SK-N-SH (cell line): ENCODE measurements at regions of chr1 and their contacts with region 1.

Region 1: GRCh38 chr1:204565617-204566582 is 49.7 kb downstream of the MDM4 start:
- DNase-seq: peak; percentile 89
- H3K4me3 ChIP-seq: no peak overlapping the region; a peak in 1 of 4 replicates
- H3K27ac ChIP-seq: no peak overlapping the region
- H3K4me1 ChIP-seq: no peaks in the 10 kb centered on the region; a peak in 1 of 4 replicates
- H3K27me3 ChIP-seq: no peaks in the 10 kb centered on the region
- CTCF ChIP-seq: peak; percentile 82
- EP300 ChIP-seq: no peak
- RAD21 ChIP-seq: peak; percentile 94

Region 2: DNA sequence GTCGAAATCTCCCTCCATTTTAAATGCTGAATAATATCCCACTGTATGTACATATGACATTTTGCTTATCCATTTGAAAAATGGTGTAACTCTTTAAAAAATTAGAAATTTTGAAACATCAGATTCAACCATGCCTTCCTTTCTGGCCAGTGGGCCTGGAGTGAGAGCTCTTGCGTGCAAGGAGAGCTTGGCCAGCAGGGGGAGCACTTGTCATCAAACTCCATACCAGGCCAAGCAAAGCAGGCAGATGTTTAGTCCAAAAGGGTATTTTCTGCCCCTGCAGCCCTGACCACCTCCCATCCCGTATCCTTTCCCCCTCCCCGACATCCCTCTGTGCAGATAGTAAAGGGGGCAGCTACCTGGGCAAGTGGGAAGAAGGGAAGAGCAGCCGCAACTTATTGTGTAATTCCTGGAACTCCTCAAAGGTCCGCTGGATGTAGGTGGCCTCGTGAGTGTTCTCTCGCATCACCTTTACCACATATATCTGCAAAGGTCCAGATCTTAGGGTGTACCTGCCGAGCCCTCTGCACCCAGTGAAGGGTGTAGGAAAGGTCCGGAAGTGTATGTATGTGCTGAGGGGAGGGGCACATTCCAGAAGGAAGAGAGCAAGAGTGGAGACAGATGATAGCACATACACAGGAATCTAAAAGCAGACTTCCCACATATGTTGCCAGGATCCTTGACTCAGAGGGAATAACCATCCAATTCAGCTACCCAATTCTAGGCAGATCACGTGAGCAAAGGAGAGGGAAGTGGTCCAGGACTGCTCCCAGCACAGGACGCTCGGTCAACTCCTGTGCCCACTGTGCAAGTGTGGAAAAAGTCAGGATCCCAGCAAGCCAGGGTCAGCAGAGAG is 134.4 kb before region 1 on chr1:
- CTCF ChIA-PET with region 1: no interaction called
- POLR2A ChIA-PET with region 1: no interaction called
- DNase-seq: peak; percentile 83
- H3K4me3 ChIP-seq: peak overlapping the region in 1 of 2 experiments; percentile 39; a peak in 1 of 4 replicates
- H3K27ac ChIP-seq: peak overlapping the region in 1 of 2 experiments; percentile 26; a peak in 1 of 4 replicates
- H3K4me1 ChIP-seq: peaks cover 0 to 7% of the 10 kb centered on the region in 2 experiments; a peak in 2 of 4 replicates
- H3K27me3 ChIP-seq: no peaks in the 10 kb centered on the region
- CTCF ChIP-seq: peak; percentile 96
- EP300 ChIP-seq: no peak
- RAD21 ChIP-seq: peak; percentile 77

Region 3: DNA sequence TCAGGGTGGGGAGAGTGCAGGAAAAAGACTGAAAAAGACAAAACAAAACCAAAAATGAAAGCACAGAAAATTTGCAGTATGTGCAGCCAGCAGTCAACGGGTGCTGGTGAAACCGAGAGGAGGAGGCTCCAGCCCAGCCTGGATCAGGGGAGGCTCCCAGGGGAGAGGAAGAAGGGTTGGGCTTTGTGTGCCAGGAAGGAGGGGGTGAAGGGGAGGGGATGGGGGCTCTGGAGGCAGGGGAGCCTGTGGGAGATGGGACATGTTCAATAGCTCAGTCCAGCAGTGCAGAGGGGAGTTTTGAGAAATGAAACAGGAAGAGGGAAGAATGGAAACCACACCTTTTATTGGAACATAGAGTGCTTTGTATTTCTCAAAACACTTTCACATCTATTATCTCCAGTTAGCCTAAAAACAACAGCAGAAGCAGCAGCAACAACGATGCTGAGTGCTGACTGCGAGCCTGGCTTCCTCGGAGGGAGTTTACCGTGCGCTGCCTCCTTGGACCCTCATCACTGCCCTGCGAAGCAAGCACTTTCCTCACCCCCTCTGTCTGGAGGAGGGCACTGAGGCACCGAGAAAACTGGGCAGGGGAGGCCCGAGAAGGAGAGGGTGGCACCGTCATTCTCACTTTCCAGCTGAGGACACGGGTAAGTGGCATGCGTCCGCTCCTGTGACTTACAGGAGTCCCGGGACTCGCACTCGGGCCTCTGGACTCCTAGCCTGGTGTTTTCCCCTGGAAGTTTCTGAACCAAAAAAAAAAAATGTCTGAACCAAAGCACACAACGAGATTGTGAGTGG is 13.2 kb after region 1 on chr1:
- CTCF ChIA-PET with region 1: interaction called, 21 read pairs
- POLR2A ChIA-PET with region 1: no interaction called
- DNase-seq: no peak
- H3K4me3 ChIP-seq: no peak overlapping the region
- H3K27ac ChIP-seq: no peak overlapping the region
- H3K4me1 ChIP-seq: peaks cover 0 to 21% of the 10 kb centered on the region in 2 experiments; a peak in 2 of 4 replicates
- H3K27me3 ChIP-seq: no peaks in the 10 kb centered on the region
- CTCF ChIP-seq: no peak
- EP300 ChIP-seq: no peak
- RAD21 ChIP-seq: no peak

Region 4: GRCh38 chr1:204685236-204686006 is 119.5 kb after region 1 on chr1 and contains the start of gene LRRN2:
- CTCF ChIA-PET with region 1: interaction called, 13 read pairs
- POLR2A ChIA-PET with region 1: no interaction called
- DNase-seq: peak; percentile 85
- H3K4me3 ChIP-seq: peak within 1 kb of the TSS in 1 of 2 experiments; percentile 24; a peak in 2 of 4 replicates
- H3K27ac ChIP-seq: no peak within 1 kb of the TSS
- H3K4me1 ChIP-seq: peaks cover 0 to 8% of the 10 kb centered on the region in 2 experiments; a peak in 1 of 4 replicates
- H3K27me3 ChIP-seq: peaks cover 33% of the 10 kb centered on the region
- CTCF ChIP-seq: no peak
- EP300 ChIP-seq: no peak
- RAD21 ChIP-seq: no peak
- polyA plus RNA-seq, gene LRRN2: not detected in 2 replicates

Region 5: DNA sequence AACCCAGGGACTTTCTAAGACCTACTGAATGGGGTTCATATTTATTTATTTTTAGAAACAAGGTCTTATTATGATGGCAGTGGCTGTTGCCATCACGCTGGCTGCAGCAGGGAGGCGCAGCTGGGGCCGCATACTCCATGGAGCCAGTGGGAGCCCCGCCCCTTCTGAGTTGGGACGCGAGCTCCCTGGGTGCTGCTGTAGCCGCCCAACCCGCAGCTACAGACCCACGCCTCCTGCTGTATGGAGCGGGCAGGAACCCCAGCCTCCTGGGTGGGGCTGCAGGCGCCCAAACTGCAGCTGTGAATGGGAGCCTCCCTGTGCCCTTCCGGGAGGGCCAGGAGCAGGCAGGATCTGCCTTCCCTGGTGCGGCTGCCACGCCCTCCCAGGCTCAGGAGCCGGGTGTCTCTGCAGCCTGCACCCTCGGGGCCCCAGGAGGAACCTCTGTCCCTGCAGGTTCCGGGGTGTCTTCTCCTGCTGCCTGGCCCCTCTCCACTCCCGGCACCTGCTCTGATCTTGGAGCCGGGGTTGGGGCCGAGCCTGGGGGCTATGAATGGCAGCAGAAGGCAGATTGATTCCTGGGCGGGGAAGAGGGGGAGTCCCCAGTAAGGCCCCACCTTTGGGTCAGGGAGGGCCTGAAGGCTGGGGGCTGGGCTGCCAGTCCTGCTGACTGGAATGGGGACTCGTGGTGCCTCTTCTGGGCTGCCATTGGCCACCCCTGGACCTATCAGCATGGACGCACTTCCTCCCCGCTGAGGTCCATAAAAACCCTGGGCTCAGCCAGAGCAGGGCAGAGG is 186.2 kb after region 1 on chr1:
- CTCF ChIA-PET with region 1: interaction called, 41 read pairs
- POLR2A ChIA-PET with region 1: no interaction called
- DNase-seq: no peak
- H3K4me3 ChIP-seq: no peak overlapping the region
- H3K27ac ChIP-seq: no peak overlapping the region
- H3K4me1 ChIP-seq: peaks cover 0 to 4% of the 10 kb centered on the region in 2 experiments; a peak in 1 of 4 replicates
- H3K27me3 ChIP-seq: no peaks in the 10 kb centered on the region
- CTCF ChIP-seq: no peak
- EP300 ChIP-seq: no peak
- RAD21 ChIP-seq: no peak

Region 6: DNA sequence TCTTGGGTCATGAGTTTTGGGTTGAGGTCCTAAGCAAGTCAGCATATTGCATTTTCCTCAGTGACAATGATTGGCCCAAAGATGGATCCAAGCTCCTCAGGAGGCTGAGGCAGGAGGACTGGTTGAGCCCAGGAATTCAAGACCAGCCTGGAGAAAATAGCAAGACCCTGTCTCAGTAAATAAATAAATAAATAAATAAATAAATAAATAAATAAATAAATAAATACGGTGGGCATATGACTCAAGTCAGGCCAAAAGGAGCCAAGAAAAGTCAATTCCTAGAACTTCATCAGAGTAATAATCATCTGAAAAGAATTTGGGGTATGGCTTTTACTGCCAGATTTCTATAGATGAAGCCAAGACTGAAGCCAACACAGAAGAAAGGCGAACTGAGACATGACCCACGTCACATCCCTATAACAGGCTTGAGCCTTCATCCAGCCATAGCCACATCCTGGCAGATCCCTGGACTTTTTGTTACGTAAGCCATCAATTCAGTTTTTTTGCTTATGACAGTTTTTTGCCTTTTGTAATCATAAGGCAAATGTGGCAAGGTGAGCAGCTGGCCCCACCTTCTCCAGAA is 216.3 kb after region 1 on chr1:
- CTCF ChIA-PET with region 1: interaction called, 12 read pairs
- POLR2A ChIA-PET with region 1: no interaction called
- DNase-seq: no peak
- H3K4me3 ChIP-seq: no peak overlapping the region
- H3K27ac ChIP-seq: no peak overlapping the region
- H3K4me1 ChIP-seq: no peaks in the 10 kb centered on the region
- H3K27me3 ChIP-seq: 0 out of 2 replicates have a peak, but pooled peaks cover 7% of the 10 kb centered on the region
- CTCF ChIP-seq: no peak
- EP300 ChIP-seq: no peak
- RAD21 ChIP-seq: no peak

Region 7: GRCh38 chr1:204819495-204819894 is 253.6 kb after region 1 on chr1:
- CTCF ChIA-PET with region 1: interaction called, 568 read pairs
- POLR2A ChIA-PET with region 1: no interaction called
- DNase-seq: peak; percentile 50
- H3K4me3 ChIP-seq: no peak overlapping the region
- H3K27ac ChIP-seq: no peak overlapping the region
- H3K4me1 ChIP-seq: peaks cover 0 to 17% of the 10 kb centered on the region in 2 experiments; a peak in 2 of 4 replicates
- H3K27me3 ChIP-seq: peaks cover 16% of the 10 kb centered on the region
- CTCF ChIP-seq: no peak
- EP300 ChIP-seq: peak in 1 of 2 experiments; percentile 56; a peak in 1 of 4 replicates
- RAD21 ChIP-seq: peak; percentile 40; the same call in 1 of the 2 replicates